ENCODE measurements at regions of chr2 and their contacts with region 1.

Region 1: DNA sequence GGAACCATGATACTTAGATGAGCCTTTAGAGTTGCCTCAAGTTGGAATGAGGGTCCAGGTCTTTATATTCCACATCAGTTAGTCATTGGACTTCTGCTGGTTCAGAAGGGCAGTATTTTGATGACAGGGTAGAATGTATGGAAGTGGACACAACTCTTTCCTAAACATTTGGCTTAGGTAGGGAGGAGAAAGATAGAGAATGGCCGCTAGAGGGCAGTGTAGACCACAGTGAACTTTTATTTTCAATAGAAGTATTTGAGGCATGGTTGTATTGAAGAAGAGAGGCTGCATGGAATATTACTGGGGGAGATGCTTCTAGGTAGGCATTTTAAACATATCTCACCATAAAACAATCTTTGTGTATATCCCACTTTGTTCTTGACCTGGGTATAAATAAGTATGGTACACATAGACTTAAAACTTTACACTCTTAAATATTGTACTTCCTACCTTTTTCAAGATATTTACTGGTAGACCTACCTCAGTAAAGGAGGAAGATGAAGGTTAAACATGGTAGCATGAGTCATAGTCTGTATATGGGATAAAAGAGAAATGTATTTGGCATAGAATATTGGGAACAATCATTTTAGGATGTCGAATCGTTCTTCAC is 497.6 kb upstream of the FAM98A start:
- DNase-seq: peak; percentile 76
- H3K4me3 Mint-ChIP-seq: no peak overlapping the region
- H3K27ac Mint-ChIP-seq: no peak overlapping the region
- H3K4me1 Mint-ChIP-seq: no peaks in the 10 kb centered on the region
- H3K27me3 Mint-ChIP-seq: no peaks in the 10 kb centered on the region

Region 2: GRCh38 chr2:34069604-34070003 is 27.1 kb before region 1 on chr2:
- intact Hi-C with region 1: no loop called
- DNase-seq: no peak
- H3K4me3 Mint-ChIP-seq: no peak overlapping the region
- H3K27ac Mint-ChIP-seq: no peak overlapping the region
- H3K4me1 Mint-ChIP-seq: no peaks in the 10 kb centered on the region
- H3K27me3 Mint-ChIP-seq: no peaks in the 10 kb centered on the region

Region 3: DNA sequence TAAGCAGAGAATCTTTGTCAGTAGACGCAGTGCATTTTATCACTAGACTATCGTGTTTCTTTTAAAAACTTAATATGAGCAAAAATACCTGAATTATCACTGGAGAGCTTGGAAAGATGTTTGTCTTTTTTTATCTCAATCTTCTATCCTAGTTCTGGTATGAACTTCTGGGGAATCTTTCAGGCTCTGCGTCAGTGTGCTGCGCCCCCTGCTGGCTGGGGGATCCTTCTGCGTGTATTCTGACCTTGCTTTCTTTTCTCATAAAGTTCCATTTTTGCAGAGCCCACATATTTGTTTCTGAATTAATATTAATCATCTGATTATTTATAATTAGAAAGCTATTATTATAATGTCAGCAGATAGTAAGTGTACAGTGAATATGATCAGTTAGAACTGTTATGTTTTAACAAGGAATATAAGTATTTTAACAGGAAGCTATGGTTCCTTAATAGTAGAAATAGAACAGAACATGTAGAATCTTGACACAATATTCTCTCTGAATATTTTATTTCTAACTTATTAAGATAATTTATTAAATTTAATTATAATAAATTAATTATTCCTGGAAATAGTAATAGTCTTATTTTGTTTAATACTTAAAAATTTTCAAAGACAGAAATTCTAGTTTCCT is 1313.9 kb after region 1 on chr2:
- intact Hi-C with region 1: loop called (anchors 1 kb)
- DNase-seq: peak; percentile 78
- H3K4me3 Mint-ChIP-seq: no peak overlapping the region
- H3K27ac Mint-ChIP-seq: no peak overlapping the region
- H3K4me1 Mint-ChIP-seq: no peaks in the 10 kb centered on the region
- H3K27me3 Mint-ChIP-seq: no peaks in the 10 kb centered on the region